ENCODE measurements at regions of chr3 and their contacts with region 1.

Region 1: GRCh38 chr3:116877968-116878367 is 168.4 kb downstream of the TUSC7 start:
- DNase-seq: no peak
- H3K4me3 ChIP-seq: no peak overlapping the region
- H3K27ac ChIP-seq: no peak overlapping the region
- H3K4me1 ChIP-seq: no peaks in the 10 kb centered on the region
- H3K27me3 ChIP-seq: no peaks in the 10 kb centered on the region
- CTCF ChIP-seq: no peak

Region 2: DNA sequence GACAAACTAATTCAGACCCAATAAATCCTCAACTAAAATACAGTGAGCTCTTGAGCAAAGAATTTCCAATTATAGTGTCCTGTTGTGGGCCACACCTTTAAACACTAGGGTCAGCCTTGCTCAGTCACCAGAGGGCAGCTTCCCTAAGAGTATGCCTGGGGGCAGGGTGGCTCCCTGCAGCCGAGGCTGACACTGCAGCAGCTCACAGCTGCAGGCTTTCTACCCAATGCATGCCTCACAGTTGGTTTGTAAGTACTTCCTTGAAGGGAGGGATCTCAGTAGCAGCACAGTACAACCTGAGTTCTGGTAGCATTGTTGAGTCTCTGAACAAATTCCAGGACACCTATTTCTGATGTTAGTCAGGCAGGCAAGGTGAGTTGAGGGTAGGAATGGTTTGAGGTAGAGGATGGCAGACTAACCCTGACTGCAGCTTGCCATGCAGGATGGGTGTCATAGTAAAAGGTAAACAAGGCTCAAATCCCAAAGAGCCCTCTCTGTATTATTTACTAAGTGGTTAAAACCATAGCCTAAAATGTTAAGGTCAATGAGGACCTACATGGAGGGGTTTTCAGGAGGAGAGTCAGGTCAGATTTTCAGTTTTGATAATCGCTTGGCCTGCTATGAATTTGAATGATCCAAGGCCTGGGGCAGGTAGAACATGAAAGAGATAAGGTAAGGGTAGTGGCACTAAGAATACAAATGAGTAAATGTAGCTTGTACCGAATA is 167.3 kb after region 1 on chr3:
- intact Hi-C with region 1: no loop called
- DNase-seq: peak; percentile 32 to 64
- H3K4me3 ChIP-seq: no peak overlapping the region
- H3K27ac ChIP-seq: no peak overlapping the region
- H3K4me1 ChIP-seq: no peaks in the 10 kb centered on the region
- H3K27me3 ChIP-seq: no peaks in the 10 kb centered on the region
- CTCF ChIP-seq: no peak

Region 3: GRCh38 chr3:117165601-117166051 is 287.7 kb after region 1 on chr3:
- intact Hi-C with region 1: loop called (anchors 10 kb)
- DNase-seq: no peak
- H3K4me3 ChIP-seq: no peak overlapping the region
- H3K27ac ChIP-seq: no peak overlapping the region
- H3K4me1 ChIP-seq: no peaks in the 10 kb centered on the region
- H3K27me3 ChIP-seq: no peaks in the 10 kb centered on the region
- CTCF ChIP-seq: no peak